ENCODE measurements at regions of chr4 and their contacts with region 1.

Region 1: DNA sequence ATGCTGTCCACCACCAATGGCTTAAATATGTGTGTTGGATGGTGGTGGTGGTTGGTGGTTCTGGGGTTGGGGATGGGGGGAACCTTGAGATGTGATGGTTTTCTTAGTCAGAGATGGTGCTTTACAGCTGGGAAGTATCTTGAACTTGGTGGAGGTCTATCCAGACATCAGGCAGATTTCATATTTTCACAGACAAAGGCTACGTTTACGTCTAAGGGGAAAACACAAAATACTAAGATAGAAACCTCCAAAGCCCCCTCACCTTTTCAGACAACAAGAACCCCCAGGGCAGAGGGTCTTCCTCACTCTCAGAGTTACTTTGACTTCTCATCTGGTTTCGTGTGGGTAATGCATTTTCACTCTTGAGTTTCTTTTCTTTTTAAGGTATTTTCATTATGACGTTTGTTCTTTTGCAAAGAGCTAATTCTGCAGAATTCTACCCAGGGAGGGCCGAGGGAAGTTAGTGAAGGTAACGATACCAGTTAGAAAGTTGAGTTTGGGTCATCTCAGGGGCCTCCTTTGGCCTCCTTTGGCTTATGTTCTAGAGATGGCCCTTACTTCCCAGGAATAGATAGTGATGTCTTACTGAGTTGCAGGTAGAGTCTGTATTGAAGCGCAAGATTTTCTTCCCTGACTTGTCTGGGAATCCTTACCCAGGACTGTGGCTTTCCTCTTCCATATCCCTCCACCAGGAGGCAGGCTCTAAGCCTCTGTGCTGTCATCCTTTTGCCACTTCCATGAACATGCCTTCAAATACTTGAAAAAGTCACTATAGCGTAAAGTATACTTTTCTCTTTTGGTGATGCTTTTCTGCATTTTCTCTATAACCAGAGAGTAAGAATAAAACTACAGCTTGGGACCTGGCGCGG is 31.9 kb downstream of the RHOH start:
- DNase-seq: no peak
- ATAC-seq: no peak
- H3K4me3 Mint-ChIP-seq: peak overlapping the region; percentile 62 to 91 (median 82)
- H3K27ac Mint-ChIP-seq: peak overlapping the region; percentile 88 to 99 (median 97)
- H3K4me1 Mint-ChIP-seq: peaks cover 47 to 96% (median 90%) of the 10 kb centered on the region in 4 donors
- H3K27me3 Mint-ChIP-seq: no peaks in the 10 kb centered on the region

Region 2: DNA sequence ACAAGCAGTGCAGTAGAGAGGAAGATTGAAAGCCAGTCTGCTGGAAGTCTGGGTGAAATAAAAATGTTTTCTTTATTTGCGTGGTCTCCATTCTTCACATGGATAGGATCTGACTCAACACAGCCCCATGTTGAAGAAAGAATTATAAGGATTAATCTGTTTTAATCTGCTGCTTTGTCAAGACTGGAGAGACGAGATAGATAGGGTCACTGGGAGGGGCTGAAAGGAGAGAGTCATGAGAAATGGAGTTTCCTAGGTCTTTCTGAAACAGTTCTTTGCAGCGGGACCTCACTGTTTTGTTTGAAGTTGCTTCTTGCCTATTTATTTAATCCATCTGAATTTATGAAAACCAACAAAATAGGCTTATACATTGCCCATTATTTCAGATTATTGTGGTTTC is 64.3 kb before region 1 on chr4:
- POLR2A ChIA-PET with region 1: no interaction called
- DNase-seq: no peak
- ATAC-seq: no peak
- H3K4me3 Mint-ChIP-seq: no peak overlapping the region
- H3K27ac Mint-ChIP-seq: peak overlapping the region in 2 of 10 donors; percentile 12 to 60
- H3K4me1 Mint-ChIP-seq: peaks cover 0 to 6% (median 2%) of the 10 kb centered on the region in 4 donors
- H3K27me3 Mint-ChIP-seq: no peaks in the 10 kb centered on the region

Region 3: GRCh38 chr4:40193016-40193571 is 35.6 kb before region 1 on chr4:
- POLR2A ChIA-PET with region 1: interaction called, 200 read pairs
- DNase-seq: peak in 6 of 10 donors; percentile 51 to 79 (median 74)
- ATAC-seq: peak; percentile 24 to 26
- H3K4me3 Mint-ChIP-seq: peak overlapping the region; percentile 86 to 100 (median 98)
- H3K27ac Mint-ChIP-seq: peak overlapping the region; percentile 94 to 100 (median 99)
- H3K4me1 Mint-ChIP-seq: peaks cover 36 to 83% (median 76%) of the 10 kb centered on the region in 4 donors
- H3K27me3 Mint-ChIP-seq: peaks cover 0 to 1% (median 0%) of the 10 kb centered on the region in 5 donors

Region 4: GRCh38 chr4:40212674-40213527 is 15.8 kb before region 1 on chr4:
- POLR2A ChIA-PET with region 1: interaction called, 376 read pairs
- DNase-seq: no peak
- ATAC-seq: no peak
- H3K4me3 Mint-ChIP-seq: peak overlapping the region; percentile 55 to 100 (median 78)
- H3K27ac Mint-ChIP-seq: peak overlapping the region; percentile 87 to 98 (median 96)
- H3K4me1 Mint-ChIP-seq: peaks cover 51 to 99% (median 94%) of the 10 kb centered on the region in 4 donors
- H3K27me3 Mint-ChIP-seq: no peaks in the 10 kb centered on the region

Region 5: DNA sequence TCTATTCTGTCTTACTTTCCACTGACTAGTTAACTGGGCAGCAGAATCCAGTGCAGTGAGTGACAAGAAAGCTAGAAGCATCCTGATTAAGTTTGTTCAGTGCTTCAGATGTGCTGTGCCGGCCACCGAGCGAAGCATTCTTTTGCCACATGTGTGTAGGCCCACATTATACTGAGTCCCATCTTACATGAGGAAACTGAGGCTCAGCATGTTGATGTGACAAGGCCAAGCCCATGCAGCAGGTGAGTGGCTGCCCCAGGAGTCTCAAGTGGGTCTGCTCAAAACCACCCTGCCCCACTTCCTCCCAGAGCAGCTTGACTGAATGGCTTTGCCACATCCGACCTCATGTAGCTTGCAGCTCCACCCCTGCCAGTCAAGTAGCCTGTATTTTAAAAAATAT is 18.6 kb after region 1 on chr4:
- POLR2A ChIA-PET with region 1: interaction called, 45 read pairs
- DNase-seq: peak in 9 of 10 donors; percentile 52 to 86 (median 70)
- ATAC-seq: peak; percentile 69 to 86
- H3K4me3 Mint-ChIP-seq: peak overlapping the region in 9 of 10 donors; percentile 49 to 84 (median 76)
- H3K27ac Mint-ChIP-seq: peak overlapping the region; percentile 94 to 98 (median 96)
- H3K4me1 Mint-ChIP-seq: peaks cover 53 to 90% (median 82%) of the 10 kb centered on the region in 4 donors
- H3K27me3 Mint-ChIP-seq: no peaks in the 10 kb centered on the region

Region 6: DNA sequence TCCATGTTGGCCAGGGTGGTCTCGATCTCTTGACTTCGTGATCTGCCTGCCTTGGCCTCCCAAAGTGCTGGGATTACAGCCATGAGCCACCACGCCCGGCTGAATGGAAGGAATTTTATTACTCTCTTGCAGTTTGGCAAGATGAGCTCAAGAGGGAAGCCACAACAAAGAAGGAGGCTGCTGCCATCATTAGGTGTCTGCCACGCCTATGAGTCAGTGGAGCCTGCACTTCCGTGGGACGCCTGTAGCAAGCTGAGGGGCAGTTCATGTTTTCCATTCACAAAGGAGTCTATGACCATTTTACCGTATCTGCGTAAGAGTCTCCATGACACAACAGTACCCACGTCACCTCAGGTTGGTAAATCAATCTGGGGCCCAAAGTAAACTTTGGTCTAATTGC is 55.2 kb after region 1 on chr4:
- POLR2A ChIA-PET with region 1: interaction called, 13 read pairs
- DNase-seq: peak; percentile 35 to 89 (median 74)
- ATAC-seq: peak; percentile 89 to 98
- H3K4me3 Mint-ChIP-seq: peak overlapping the region; percentile 29 to 77 (median 68)
- H3K27ac Mint-ChIP-seq: peak overlapping the region; percentile 88 to 98 (median 94)
- H3K4me1 Mint-ChIP-seq: peaks cover 33 to 84% (median 80%) of the 10 kb centered on the region in 4 donors
- H3K27me3 Mint-ChIP-seq: no peaks in the 10 kb centered on the region